Activated CD4-positive, alpha-beta memory T cell treated with anti-CD3 and anti-CD28 coated beads, Interleukin-2, amount 10 ng/mL, durations not matched to agents 7 days and 5 days (primary cell): ENCODE measurements at regions of chr1 and their contacts with region 1.

Region 1: GRCh38 chr1:1170215-1171101 is 3.2 kb upstream of the TTLL10 start:
- DNase-seq: no peak
- H3K4me3 Mint-ChIP-seq: no peak overlapping the region
- H3K27ac Mint-ChIP-seq: no peak overlapping the region
- H3K4me1 Mint-ChIP-seq: peaks cover 30% of the 10 kb centered on the region
- H3K27me3 Mint-ChIP-seq: peaks cover 3% of the 10 kb centered on the region

Region 2: GRCh38 chr1:941588-942383 is 228.7 kb before region 1 on chr1:
- CTCF ChIA-PET with region 1: no interaction called
- POLR2A ChIA-PET with region 1: no interaction called
- DNase-seq: no peak
- H3K4me3 Mint-ChIP-seq: peak overlapping the region; percentile 30
- H3K27ac Mint-ChIP-seq: no peak overlapping the region
- H3K4me1 Mint-ChIP-seq: peaks cover 7% of the 10 kb centered on the region
- H3K27me3 Mint-ChIP-seq: peaks cover 32% of the 10 kb centered on the region

Region 3: DNA sequence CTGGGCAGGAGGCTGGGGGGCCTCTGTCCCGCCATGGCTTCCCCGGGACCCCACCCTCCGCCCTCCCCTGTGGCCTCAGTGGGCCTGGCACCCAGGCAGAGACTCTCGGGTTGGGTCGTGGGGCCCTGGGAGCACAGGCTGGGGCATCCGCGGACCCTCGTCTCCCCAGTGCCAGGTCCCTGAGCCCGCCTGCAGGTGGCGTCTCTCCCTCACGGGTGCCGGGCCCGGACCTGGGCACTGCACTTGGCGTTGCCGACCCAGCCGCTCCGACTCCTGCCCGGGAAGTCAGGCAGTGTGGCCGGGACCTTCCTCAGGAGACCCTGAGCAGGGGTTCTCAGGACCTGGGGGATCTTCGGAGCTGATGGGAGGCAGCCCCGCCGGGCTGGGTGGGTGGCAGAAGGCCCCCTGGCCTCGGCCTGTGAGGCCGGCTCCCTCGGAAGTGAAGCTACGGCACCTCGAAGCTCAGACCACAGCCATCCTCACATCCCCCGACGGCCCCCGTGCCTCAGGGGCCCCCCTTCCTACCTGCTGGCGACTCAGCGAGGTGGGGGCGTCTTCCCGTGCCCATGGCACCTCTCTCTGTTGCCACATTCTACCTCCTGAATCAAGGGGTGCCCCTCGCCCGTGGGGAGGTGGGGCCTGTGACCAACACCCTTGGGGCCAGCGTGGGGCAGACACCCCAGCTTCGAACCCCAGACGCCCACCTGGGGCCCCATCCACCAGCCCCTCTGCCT is 48.2 kb before region 1 on chr1:
- CTCF ChIA-PET with region 1: no interaction called
- POLR2A ChIA-PET with region 1: no interaction called
- DNase-seq: peak; percentile 87
- H3K4me3 Mint-ChIP-seq: no peak overlapping the region
- H3K27ac Mint-ChIP-seq: no peak overlapping the region
- H3K4me1 Mint-ChIP-seq: peaks cover 10% of the 10 kb centered on the region
- H3K27me3 Mint-ChIP-seq: peaks cover 15% of the 10 kb centered on the region

Region 4: GRCh38 chr1:1157426-1157913 is 13.0 kb before region 1 on chr1:
- CTCF ChIA-PET with region 1: no interaction called
- POLR2A ChIA-PET with region 1: interaction called, 17 read pairs
- DNase-seq: peak; percentile 73
- H3K4me3 Mint-ChIP-seq: peak overlapping the region; percentile 69
- H3K27ac Mint-ChIP-seq: peak overlapping the region; percentile 54
- H3K4me1 Mint-ChIP-seq: peaks cover 1% of the 10 kb centered on the region
- H3K27me3 Mint-ChIP-seq: peaks cover 2% of the 10 kb centered on the region